Heart left ventricle (tissue), 16 donors: ENCODE measurements at regions of chr9 and their contacts with region 1.

Region 1: DNA sequence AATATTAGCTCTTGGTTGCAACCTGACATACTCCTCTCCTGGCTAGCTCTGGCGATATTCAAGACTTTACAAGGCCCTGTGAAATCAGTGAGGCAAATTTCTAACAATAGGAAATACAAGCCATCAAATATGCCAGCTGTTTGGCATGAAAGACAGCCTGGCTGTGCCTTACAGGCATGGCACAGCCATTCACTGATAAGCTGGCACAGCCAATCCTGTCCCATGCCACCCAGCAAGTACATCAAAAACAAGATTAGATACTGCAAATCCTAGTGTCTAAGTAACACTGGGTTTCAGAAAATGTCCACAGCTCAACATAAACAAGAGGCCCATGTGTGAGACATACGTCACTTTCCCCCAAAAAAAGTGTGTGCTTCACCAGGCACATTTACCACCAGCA is 1045.8 kb upstream of the DMAC1 start:
- DNase-seq: peak in 4 of 5 donors; percentile 45 to 70 (median 63)
- ATAC-seq: peak; percentile 96 to 99 (median 98)
- H3K4me3 ChIP-seq: no peak overlapping the region
- H3K27ac ChIP-seq: peak overlapping the region in 6 of 12 donors; percentile 20 to 66 (median 50)
- H3K4me1 ChIP-seq: peaks cover 0 to 8% (median 1%) of the 10 kb centered on the region in 12 donors
- H3K27me3 ChIP-seq: no peaks in the 10 kb centered on the region
- CTCF ChIP-seq: no peak
- POLR2A ChIP-seq: no peak

Region 2: GRCh38 chr9:7656636-7657035 is 1188.7 kb before region 1 on chr9:
- intact Hi-C with region 1: no loop called
- DNase-seq: peak in 2 of 5 donors; percentile 16 to 20
- ATAC-seq: peak in 2 of 4 donors; percentile 62 to 63
- H3K4me3 ChIP-seq: no peak overlapping the region
- H3K27ac ChIP-seq: no peak overlapping the region
- H3K4me1 ChIP-seq: peaks cover 0 to 8% (median 4%) of the 10 kb centered on the region in 12 donors
- H3K27me3 ChIP-seq: no peaks in the 10 kb centered on the region
- CTCF ChIP-seq: no peak
- POLR2A ChIP-seq: no peak

Region 3: DNA sequence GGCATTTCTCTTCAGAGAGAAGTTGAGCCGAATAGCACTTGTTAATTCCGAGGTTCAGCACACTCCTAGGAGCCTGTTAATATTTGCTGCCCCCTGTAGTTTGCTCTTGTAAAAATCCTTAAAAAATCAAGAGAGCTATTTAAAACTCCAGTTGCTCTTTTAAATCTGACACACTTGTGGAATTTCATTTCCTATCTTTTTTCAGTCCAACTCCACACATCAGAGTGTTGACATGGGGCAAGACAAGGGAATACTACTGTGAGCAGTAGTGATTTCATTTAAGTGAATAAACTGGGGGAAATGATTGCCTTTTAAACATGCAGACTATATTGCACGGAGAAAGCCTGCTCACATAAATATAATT is 50.5 kb after region 1 on chr9:
- intact Hi-C with region 1: no loop called
- DNase-seq: no peak
- ATAC-seq: peak; percentile 37 to 86 (median 72)
- H3K4me3 ChIP-seq: peak overlapping the region in 3 of 12 donors; percentile 4 to 38 (median 23)
- H3K27ac ChIP-seq: no peak overlapping the region
- H3K4me1 ChIP-seq: peaks cover 0 to 10% (median 0%) of the 10 kb centered on the region in 12 donors
- H3K27me3 ChIP-seq: no peaks in the 10 kb centered on the region
- CTCF ChIP-seq: peak; percentile 37 to 72 (median 60)
- POLR2A ChIP-seq: no peak

Region 4: DNA sequence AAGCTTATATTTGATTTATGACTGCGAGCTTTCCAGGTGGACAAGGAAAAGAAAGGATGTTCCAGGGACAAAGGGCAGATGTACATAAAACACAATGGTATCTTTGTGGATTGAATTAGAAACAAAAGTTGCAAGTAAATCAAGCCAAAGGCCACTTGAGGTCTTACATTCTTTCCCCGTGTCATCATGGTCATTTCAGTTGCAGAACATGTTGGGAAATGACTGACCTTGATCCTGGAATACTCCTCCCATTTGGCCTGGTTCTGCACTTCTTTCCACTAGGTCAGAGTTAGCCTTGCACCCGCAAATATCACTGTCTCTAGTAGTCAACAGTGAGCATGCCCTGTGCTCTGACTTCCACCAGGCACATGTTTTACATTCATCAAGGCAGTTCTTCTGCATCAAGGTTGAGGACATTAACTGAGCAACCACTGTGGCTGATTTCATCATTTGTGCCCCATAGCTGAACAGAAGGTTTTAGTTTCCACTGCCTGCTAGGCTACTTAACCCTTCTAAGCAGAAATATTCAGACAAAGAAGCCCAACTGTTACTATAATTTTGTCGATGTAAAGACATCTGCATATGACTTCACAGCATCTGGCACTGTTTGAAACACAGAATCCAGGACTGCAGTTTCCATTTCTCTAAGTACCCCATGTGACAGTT is 115.9 kb after region 1 on chr9:
- intact Hi-C with region 1: loop called in 1 of 10 experiments (anchors 5 kb)
- DNase-seq: peak in 4 of 5 donors; percentile 50 to 81 (median 58)
- ATAC-seq: peak; percentile 98 to 99 (median 98)
- H3K4me3 ChIP-seq: no peak overlapping the region
- H3K27ac ChIP-seq: peak overlapping the region; percentile 31 to 89 (median 72)
- H3K4me1 ChIP-seq: peaks cover 0 to 19% (median 9%) of the 10 kb centered on the region in 12 donors
- H3K27me3 ChIP-seq: no peaks in the 10 kb centered on the region
- CTCF ChIP-seq: no peak
- POLR2A ChIP-seq: no peak